Heart left ventricle (tissue), 16 donors: ENCODE measurements at regions of chr11 and their contacts with region 1.

Region 1: GRCh38 chr11:36469881-36470802 is 39.9 kb downstream of the TRAF6 start:
- DNase-seq: no peak
- ATAC-seq: peak in 2 of 4 donors; percentile 60 to 78
- H3K4me3 ChIP-seq: no peak overlapping the region
- H3K27ac ChIP-seq: peak overlapping the region in 3 of 12 donors; percentile 2 to 35 (median 26)
- H3K4me1 ChIP-seq: peaks cover 0 to 20% (median 13%) of the 10 kb centered on the region in 12 donors
- H3K27me3 ChIP-seq: no peaks in the 10 kb centered on the region
- CTCF ChIP-seq: no peak
- POLR2A ChIP-seq: no peak

Region 2: GRCh38 chr11:35938231-35938630 is 531.9 kb before region 1 on chr11:
- intact Hi-C with region 1: loop called in 1 of 10 experiments (anchors 5 kb)
- DNase-seq: no peak
- ATAC-seq: no peak
- H3K4me3 ChIP-seq: no peak overlapping the region
- H3K27ac ChIP-seq: no peak overlapping the region
- H3K4me1 ChIP-seq: peaks cover 0 to 15% (median 3%) of the 10 kb centered on the region in 12 donors
- H3K27me3 ChIP-seq: peaks cover 0 to 6% (median 0%) of the 10 kb centered on the region in 9 donors
- CTCF ChIP-seq: no peak
- POLR2A ChIP-seq: no peak

Region 3: DNA sequence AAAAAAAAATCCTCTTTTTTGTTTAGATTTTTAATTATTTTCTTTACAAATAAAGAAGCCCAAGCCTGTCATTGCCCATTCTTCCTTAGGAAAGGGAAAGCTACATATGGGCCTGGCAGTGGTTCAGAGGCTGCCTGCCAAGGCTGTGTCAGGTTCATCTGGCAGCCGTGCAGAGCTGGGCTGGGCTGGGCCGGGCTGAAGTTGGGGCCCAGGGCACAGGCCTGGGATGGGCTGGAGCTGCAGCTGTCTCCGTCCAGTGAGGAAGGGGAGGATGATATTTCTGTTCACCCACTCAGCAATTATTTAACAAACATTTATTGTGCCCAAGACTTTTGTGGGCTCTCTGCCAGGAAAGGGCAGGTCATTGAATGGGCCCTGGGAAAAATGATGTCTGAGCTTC is 169.5 kb before region 1 on chr11:
- intact Hi-C with region 1: loop called in 7 of 10 experiments (anchors 5 kb)
- DNase-seq: peak; percentile 58 to 80 (median 73)
- ATAC-seq: peak; percentile 91 to 97 (median 94)
- H3K4me3 ChIP-seq: no peak overlapping the region
- H3K27ac ChIP-seq: no peak overlapping the region
- H3K4me1 ChIP-seq: peaks cover 0 to 14% (median 3%) of the 10 kb centered on the region in 12 donors
- H3K27me3 ChIP-seq: no peaks in the 10 kb centered on the region
- CTCF ChIP-seq: no peak
- POLR2A ChIP-seq: no peak

Region 4: DNA sequence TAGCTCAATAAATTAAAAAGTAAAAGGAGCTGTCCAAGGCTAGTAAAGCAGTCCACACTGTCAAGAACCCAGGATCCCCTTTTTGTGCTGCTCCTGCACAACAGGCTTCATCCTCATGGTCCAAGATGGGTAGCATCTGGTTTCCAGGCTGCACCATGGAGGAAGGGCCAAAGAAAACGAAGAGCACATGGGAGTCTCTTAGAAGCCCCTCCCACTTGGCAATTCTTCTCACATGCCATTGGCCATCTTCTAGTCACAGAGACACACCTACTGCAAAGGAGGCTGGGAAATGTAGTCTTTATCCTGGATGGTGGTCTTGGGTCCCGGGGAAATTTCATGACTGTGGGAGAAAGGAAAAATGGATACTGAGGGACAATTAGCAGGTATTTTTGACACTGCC is 136.2 kb before region 1 on chr11:
- intact Hi-C with region 1: no loop called
- DNase-seq: no peak
- ATAC-seq: peak in 2 of 4 donors; percentile 49 to 57
- H3K4me3 ChIP-seq: no peak overlapping the region
- H3K27ac ChIP-seq: no peak overlapping the region
- H3K4me1 ChIP-seq: no peaks in the 10 kb centered on the region
- H3K27me3 ChIP-seq: no peaks in the 10 kb centered on the region
- CTCF ChIP-seq: no peak
- POLR2A ChIP-seq: no peak